OCI-LY7 (cell line): ENCODE measurements at regions of chr16 and their contacts with region 1.

Region 1: DNA sequence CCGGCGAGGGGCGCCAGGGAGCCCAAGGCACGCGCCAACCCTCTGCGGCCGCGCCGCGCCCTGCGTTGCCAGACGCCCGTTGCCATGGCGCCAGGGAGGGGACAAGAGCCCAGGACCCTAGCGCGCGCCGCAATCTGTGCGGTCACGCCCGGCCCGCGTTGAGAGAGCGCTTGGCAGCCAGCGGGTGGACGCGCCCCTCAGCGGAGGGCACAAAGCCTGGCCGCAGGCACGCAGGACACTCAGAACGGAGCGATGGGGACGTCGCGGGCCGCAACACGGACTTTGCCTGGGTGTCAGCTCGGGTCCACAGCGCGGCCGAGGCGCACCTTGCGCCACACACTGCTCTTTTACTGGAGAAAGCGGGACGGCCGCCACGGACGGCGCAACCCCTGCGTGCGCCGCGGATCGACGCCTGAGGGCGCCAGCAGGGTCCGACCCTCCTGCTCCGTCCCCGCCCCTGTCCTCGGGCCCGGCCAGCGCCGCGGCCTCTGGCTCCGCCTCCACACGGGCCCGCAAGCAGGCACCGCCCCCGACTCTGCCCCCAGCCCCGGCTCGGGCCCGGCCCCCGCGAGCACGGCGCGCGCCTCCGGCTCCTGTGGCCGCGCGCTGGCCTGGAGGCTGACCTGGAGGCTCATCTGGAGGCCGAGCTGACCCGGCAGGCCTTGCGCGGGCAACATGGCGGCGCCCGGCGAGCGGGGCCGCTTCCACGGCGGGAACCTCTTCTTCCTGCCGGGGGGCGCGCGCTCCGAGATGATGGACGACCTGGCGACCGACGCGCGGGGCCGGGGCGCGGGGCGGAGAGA is at the start of gene GFER:
- DNase-seq: peak; percentile 80
- H3K4me3 ChIP-seq: peak within 1 kb of the TSS; percentile 82
- H3K27ac ChIP-seq: peak within 1 kb of the TSS; percentile 37
- H3K4me1 ChIP-seq: peaks cover 14% of the 10 kb centered on the region
- CTCF ChIP-seq: peak; percentile 59; the same call in 1 of the 2 replicates
- total RNA-seq, gene GFER: 25.1 and 32.3 TPM in 2 replicates

Region 2: GRCh38 chr16:1971796-1972489 is 11.8 kb before region 1 on chr16 and contains the start of gene TBL3:
- CTCF ChIA-PET with region 1: no interaction called
- POLR2A ChIA-PET with region 1: interaction called, 3 read pairs
- intact Hi-C with region 1: loop called (anchors 1 kb)
- DNase-seq: peak; percentile 97
- H3K4me3 ChIP-seq: peak within 1 kb of the TSS; percentile 86
- H3K27ac ChIP-seq: peak within 1 kb of the TSS; percentile 88
- H3K4me1 ChIP-seq: peaks cover 12% of the 10 kb centered on the region
- CTCF ChIP-seq: no peak
- total RNA-seq, gene TBL3: 58.5 and 67.2 TPM in 2 replicates

Region 3: GRCh38 chr16:2142942-2143877 is 159.5 kb after region 1 on chr16:
- CTCF ChIA-PET with region 1: no interaction called
- POLR2A ChIA-PET with region 1: no interaction called
- intact Hi-C with region 1: no loop called
- DNase-seq: no peak
- H3K4me3 ChIP-seq: no peak overlapping the region
- H3K27ac ChIP-seq: no peak overlapping the region
- H3K4me1 ChIP-seq: peaks cover 5% of the 10 kb centered on the region
- CTCF ChIP-seq: no peak